T-cell (primary cell): ENCODE measurements at regions of chr5 and their contacts with region 1.

Region 1: GRCh38 chr5:125198270-125198974 is 452.0 kb upstream of the ZNF608 start:
- DNase-seq: no peak
- ATAC-seq: no peak
- H3K4me3 ChIP-seq: no peak overlapping the region
- H3K4me3 Mint-ChIP-seq: no peak overlapping the region
- H3K27ac ChIP-seq: no peak overlapping the region
- H3K27ac Mint-ChIP-seq: no peak overlapping the region
- H3K4me1 ChIP-seq: no peaks in the 10 kb centered on the region
- H3K4me1 Mint-ChIP-seq: no peaks in the 10 kb centered on the region
- H3K27me3 ChIP-seq: no peaks in the 10 kb centered on the region
- H3K27me3 Mint-ChIP-seq: no peaks in the 10 kb centered on the region

Region 2: GRCh38 chr5:124725040-124725434 is 473.4 kb before region 1 on chr5:
- CTCF ChIA-PET with region 1: no interaction called
- POLR2A ChIA-PET with region 1: interaction called in 1 of 2 experiments, 11 read pairs
- DNase-seq: no peak
- ATAC-seq: no peak
- H3K4me3 ChIP-seq: no peak overlapping the region
- H3K4me3 Mint-ChIP-seq: no peak overlapping the region
- H3K27ac ChIP-seq: no peak overlapping the region
- H3K27ac Mint-ChIP-seq: no peak overlapping the region
- H3K4me1 ChIP-seq: no peaks in the 10 kb centered on the region
- H3K4me1 Mint-ChIP-seq: no peaks in the 10 kb centered on the region
- H3K27me3 ChIP-seq: no peaks in the 10 kb centered on the region
- H3K27me3 Mint-ChIP-seq: peaks cover 0 to 5% of the 10 kb centered on the region in 2 donors

Region 3: GRCh38 chr5:125160787-125161502 is 37.5 kb before region 1 on chr5:
- CTCF ChIA-PET with region 1: no interaction called
- POLR2A ChIA-PET with region 1: no interaction called
- DNase-seq: peak in 1 of 35 experiments; percentile 0
- ATAC-seq: no peak
- H3K4me3 ChIP-seq: no peak overlapping the region
- H3K4me3 Mint-ChIP-seq: no peak overlapping the region
- H3K27ac ChIP-seq: no peak overlapping the region
- H3K27ac Mint-ChIP-seq: no peak overlapping the region
- H3K4me1 ChIP-seq: no peaks in the 10 kb centered on the region
- H3K4me1 Mint-ChIP-seq: no peaks in the 10 kb centered on the region
- H3K27me3 ChIP-seq: peaks cover 0 to 10% of the 10 kb centered on the region in 2 experiments
- H3K27me3 Mint-ChIP-seq: no peaks in the 10 kb centered on the region

Region 4: DNA sequence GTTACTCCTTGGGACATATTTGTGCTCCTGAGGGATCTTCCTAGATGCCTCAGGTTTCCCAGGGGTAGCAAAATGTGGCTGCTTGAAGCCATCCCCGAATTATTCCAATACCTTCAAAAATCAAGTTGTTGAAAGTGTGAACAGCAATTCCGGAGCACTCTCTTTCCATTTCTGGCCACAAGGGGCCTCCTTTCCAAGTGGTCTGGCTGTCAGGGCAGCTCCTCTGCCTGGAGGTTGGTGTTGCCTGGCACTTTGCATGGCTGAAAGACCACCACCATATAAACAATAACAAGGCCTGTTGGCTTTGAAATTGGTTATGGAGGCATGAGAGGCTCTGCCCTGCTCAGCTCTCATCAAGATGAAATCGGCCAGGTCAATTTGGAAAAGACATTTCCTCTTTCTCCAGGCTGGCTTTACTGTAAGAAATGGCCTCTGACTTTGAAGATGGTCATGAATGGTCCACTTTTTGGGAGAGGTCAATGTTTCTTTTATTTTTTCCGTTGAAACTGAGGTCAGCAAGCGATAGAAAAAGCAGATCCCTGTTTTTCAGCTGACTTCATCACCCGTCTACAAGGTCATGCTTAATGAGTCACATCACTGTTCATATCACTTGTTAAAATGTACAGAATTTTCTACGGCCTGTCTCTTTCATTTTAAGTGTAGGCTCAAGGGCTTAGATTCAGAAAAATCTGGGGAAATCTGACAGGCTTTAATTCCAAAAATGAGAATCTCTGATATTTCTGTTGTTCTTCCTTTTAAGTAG is 29.1 kb after region 1 on chr5:
- CTCF ChIA-PET with region 1: no interaction called
- POLR2A ChIA-PET with region 1: no interaction called
- DNase-seq: no peak
- ATAC-seq: no peak
- H3K4me3 ChIP-seq: no peak overlapping the region
- H3K4me3 Mint-ChIP-seq: no peak overlapping the region
- H3K27ac ChIP-seq: no peak overlapping the region
- H3K27ac Mint-ChIP-seq: no peak overlapping the region
- H3K4me1 ChIP-seq: no peaks in the 10 kb centered on the region
- H3K4me1 Mint-ChIP-seq: no peaks in the 10 kb centered on the region
- H3K27me3 ChIP-seq: no peaks in the 10 kb centered on the region
- H3K27me3 Mint-ChIP-seq: no peaks in the 10 kb centered on the region